ENCODE measurements at regions of chr13 and their contacts with region 1.

Region 1: GRCh38 chr13:98570929-98571372 is 6.0 kb downstream of the STK24 start:
- DNase-seq: peak; percentile 65
- ATAC-seq: peak; percentile 58
- H3K4me3 Mint-ChIP-seq: peak overlapping the region; percentile 75
- H3K27ac Mint-ChIP-seq: peak overlapping the region; percentile 73
- H3K4me1 Mint-ChIP-seq: peaks cover 87% of the 10 kb centered on the region
- H3K27me3 Mint-ChIP-seq: no peaks in the 10 kb centered on the region

Region 2: GRCh38 chr13:98173431-98174152 is 397.4 kb before region 1 on chr13:
- CTCF ChIA-PET with region 1: no interaction called
- POLR2A ChIA-PET with region 1: no interaction called
- intact Hi-C with region 1: no loop called
- DNase-seq: no peak
- ATAC-seq: no peak
- H3K4me3 Mint-ChIP-seq: no peak overlapping the region
- H3K27ac Mint-ChIP-seq: no peak overlapping the region
- H3K4me1 Mint-ChIP-seq: no peaks in the 10 kb centered on the region
- H3K27me3 Mint-ChIP-seq: peaks cover 21% of the 10 kb centered on the region

Region 3: DNA sequence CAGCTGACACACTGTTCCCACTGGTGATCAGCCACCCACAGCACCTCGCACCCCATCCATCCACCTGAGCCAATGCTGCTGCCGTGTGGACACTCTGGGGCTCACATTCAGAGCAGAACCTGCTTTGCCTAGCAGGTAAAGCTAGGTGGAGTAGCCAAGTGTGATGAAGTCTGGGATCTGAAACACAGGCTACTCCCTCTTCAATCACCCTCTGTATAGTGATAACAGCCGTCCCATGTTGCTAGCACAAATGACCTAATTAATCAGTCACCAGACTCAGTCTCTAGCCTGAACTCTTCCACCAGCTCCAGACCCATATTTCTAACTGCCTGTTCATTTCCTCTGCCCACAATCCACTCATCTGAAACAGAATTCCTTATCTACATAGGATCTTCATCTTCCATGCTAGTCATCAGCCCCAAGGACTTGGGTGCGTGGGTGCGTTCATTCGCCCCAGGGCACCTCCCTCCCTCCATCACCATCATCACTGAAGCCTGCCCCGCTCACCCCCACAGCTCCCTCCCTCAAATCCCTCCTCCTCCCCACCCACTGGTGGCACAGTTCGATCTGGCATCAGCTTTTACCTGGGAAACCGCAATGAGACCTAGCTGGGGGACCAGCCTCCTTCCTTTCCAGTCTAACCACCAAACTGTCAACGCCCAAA is 13.9 kb before region 1 on chr13:
- CTCF ChIA-PET with region 1: interaction called, 4 read pairs
- POLR2A ChIA-PET with region 1: interaction called, 7 read pairs
- intact Hi-C with region 1: loop called in 1 of 2 experiments (anchors 2 kb)
- DNase-seq: peak; percentile 42
- ATAC-seq: peak; percentile 35
- H3K4me3 Mint-ChIP-seq: peak overlapping the region; percentile 40
- H3K27ac Mint-ChIP-seq: peak overlapping the region; percentile 84
- H3K4me1 Mint-ChIP-seq: peaks cover 82% of the 10 kb centered on the region
- H3K27me3 Mint-ChIP-seq: no peaks in the 10 kb centered on the region

Region 4: GRCh38 chr13:99307648-99308339 is 736.8 kb after region 1 on chr13:
- CTCF ChIA-PET with region 1: interaction called, 3 read pairs
- POLR2A ChIA-PET with region 1: no interaction called
- intact Hi-C with region 1: loop called in 1 of 2 experiments (anchors 5 kb)
- DNase-seq: peak; percentile 88
- ATAC-seq: peak; percentile 82
- H3K4me3 Mint-ChIP-seq: peak overlapping the region; percentile 85
- H3K27ac Mint-ChIP-seq: peak overlapping the region; percentile 98
- H3K4me1 Mint-ChIP-seq: peaks cover 73% of the 10 kb centered on the region
- H3K27me3 Mint-ChIP-seq: no peaks in the 10 kb centered on the region

Measured in activated CD4-positive, alpha-beta T cell treated with anti-CD3 and anti-CD28 coated beads for 36 hours (primary cell).